Endothelial cell of umbilical vein (primary cell): ENCODE measurements at regions of chr6 and their contacts with region 1.

Region 1: DNA sequence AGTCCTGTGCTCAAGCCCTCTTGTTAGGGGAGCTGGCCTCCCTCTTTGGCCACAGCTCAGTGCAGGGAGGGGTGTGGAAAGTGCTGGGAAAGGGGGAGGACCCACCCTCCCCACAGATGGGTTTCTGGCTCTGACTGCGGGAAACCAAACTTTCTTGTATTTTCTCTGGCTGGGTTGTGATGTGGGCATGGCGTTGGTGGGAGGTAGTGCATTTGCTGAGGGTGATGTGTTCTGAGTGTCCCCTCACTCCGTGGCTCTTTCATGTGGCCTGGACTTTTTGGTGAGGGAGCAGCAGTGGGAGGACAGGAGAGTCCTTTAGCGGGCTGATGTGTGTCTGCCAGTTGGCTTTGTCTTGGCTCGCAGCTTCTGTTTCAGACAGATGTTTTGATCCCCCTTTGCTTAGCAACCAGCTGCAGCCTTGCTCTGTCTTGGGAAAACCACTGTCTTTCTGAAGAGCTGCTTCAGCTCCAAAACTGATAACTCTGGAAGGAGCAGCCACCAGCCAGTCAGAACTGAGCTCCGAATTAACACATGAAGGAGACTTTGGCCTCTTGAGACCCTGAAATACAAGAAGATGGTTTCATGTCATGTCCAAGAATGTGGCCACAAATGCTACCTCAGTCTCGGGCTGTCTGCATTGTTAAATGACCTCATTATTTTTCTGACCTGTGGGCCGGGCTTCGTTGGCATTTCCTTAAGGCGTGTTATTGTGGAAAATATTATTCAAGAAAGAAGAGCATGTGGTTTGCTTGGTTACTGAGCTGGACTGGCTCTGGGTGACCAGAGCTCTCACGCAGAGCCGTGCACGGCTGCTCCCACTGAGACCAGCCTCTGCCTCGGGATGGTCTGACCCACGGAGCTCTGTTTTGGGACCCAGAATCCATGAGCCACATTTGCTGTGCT is 21.5 kb downstream of the SYNJ2 start:
- DNase-seq: peak; percentile 97
- H3K4me3 ChIP-seq: no peak overlapping the region
- H3K27ac ChIP-seq: peak overlapping the region; percentile 91
- H3K4me1 ChIP-seq: peaks cover 32% of the 10 kb centered on the region
- H3K27me3 ChIP-seq: no peaks in the 10 kb centered on the region
- CTCF ChIP-seq: no peak
- POLR2A ChIP-seq: peak; percentile 43

Region 2: DNA sequence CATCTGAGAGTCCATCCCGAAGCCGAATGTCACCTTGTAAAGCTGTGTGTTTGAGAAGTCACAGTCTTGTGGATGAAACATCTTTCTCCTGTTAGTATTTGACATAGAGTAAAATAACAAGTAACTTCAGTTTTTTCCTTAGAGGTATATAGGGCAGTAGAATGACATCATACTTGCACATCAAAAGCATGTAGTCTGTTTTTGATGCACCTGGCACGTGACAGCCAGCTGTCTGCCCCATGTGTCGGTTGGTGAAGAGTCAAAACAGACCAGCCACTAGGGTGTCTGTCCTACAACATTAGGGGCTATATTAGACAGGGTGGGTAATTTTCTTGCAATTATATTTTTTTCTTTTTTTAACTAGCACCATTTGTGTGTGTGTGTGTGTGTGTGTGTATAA is 110.0 kb before region 1 on chr6:
- CTCF ChIA-PET with region 1: no interaction called
- POLR2A ChIA-PET with region 1: no interaction called
- dilution Hi-C with region 1: no loop called
- intact Hi-C with region 1: no loop called
- DNase-seq: no peak
- H3K4me3 ChIP-seq: no peak overlapping the region
- H3K27ac ChIP-seq: no peak overlapping the region
- H3K4me1 ChIP-seq: no peaks in the 10 kb centered on the region
- H3K27me3 ChIP-seq: no peaks in the 10 kb centered on the region
- CTCF ChIP-seq: no peak
- POLR2A ChIP-seq: no peak

Region 3: DNA sequence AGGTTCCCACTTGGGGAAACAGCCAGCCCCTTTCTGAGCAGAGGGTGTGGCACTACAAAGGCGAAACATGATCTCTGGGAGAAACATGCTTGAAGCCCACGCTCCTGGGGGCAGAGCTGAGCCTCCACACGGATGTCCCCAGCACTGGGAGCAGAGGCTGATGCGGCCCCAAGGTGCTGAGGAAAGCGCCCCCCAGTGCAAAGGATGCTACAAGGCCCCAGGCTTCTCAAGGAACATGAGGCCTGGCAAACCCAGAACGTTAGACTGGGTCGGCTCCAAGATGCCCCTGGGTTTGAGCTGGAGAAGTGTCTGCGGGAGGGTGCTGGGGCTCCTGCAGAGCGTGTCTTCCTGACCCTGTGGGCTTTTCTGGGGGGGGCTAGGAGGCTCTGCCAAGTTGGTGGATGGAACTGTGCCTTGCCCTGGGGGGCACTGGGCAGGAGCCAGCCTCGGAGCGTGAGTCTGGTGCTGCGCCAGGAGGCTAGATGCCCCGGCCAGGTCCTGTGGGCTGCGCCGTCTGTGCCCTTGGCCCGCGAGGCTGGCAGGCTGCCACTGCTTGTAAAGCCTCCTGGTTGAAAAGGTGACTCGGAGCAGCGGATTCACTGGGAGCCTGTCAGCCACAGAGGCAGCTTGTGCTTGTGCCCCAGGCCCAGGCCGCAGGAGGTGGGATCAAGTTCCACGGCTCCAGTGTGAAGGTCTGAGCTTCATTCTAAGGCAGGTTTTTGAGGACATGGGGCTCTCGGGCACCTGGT is 13.5 kb before region 1 on chr6:
- CTCF ChIA-PET with region 1: interaction called, 28 read pairs
- POLR2A ChIA-PET with region 1: interaction called, 5 read pairs
- dilution Hi-C with region 1: no loop called
- intact Hi-C with region 1: loop called (anchors 1 kb)
- DNase-seq: peak; percentile 67
- H3K4me3 ChIP-seq: no peak overlapping the region
- H3K27ac ChIP-seq: no peak overlapping the region
- H3K4me1 ChIP-seq: peaks cover 23% of the 10 kb centered on the region
- H3K27me3 ChIP-seq: no peaks in the 10 kb centered on the region
- CTCF ChIP-seq: no peak
- POLR2A ChIP-seq: no peak

Region 4: GRCh38 chr6:158060455-158061360 is 57.5 kb after region 1 on chr6:
- CTCF ChIA-PET with region 1: interaction called, 4 read pairs
- POLR2A ChIA-PET with region 1: no interaction called
- dilution Hi-C with region 1: no loop called
- intact Hi-C with region 1: loop called (anchors 1 kb)
- DNase-seq: peak; percentile 92
- H3K4me3 ChIP-seq: no peak overlapping the region
- H3K27ac ChIP-seq: peak overlapping the region; percentile 99
- H3K4me1 ChIP-seq: peaks cover 62% of the 10 kb centered on the region
- H3K27me3 ChIP-seq: no peaks in the 10 kb centered on the region
- CTCF ChIP-seq: no peak
- POLR2A ChIP-seq: no peak